ENCODE measurements at regions of chr17 and their contacts with region 1.

Region 1: DNA sequence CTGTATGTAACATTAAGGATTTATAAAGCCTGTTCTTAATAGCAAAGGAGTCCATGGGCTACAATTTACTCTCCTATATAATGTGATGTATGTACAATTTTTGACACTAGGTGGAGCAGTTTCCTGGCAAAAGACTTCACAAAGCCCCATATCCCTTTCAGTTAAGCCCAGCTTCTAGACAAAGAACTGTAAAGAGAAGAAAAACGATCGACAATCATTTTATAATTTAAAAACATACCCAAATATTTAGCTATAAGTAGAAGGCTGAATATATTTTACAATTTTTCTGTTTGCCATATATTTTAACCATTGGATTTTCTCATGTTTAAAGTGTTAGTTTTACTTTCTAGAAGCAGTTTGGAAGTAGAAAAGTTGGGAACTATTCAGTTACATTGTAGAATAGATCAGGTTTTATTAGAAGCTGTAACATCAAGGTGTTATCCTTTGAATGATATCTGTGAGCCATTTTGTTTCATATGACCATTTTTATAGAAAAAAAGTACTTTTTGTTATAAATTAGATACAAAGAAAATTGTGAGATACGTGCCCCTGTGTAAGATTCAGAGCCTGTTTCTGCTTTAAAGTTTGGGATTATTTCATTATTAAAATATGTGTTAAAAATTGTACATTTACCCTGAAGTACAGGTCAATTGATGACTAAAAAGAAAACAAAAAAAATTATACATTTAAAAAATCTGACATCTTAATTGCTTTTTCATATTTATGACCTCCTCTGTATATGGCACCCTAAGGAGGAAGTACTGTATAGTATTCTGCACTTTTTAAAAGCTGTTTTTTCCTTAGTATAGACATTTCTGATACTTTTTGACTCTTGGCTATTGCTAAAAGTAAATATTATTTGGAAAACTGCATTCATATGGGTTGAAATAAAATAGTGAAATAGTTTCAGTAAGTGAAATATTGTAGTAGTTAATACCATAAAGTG is 46.3 kb downstream of the VMP1 start:
- DNase-seq: peak in 11 of 42 donors; percentile 10 to 69 (median 34)

Region 2: DNA sequence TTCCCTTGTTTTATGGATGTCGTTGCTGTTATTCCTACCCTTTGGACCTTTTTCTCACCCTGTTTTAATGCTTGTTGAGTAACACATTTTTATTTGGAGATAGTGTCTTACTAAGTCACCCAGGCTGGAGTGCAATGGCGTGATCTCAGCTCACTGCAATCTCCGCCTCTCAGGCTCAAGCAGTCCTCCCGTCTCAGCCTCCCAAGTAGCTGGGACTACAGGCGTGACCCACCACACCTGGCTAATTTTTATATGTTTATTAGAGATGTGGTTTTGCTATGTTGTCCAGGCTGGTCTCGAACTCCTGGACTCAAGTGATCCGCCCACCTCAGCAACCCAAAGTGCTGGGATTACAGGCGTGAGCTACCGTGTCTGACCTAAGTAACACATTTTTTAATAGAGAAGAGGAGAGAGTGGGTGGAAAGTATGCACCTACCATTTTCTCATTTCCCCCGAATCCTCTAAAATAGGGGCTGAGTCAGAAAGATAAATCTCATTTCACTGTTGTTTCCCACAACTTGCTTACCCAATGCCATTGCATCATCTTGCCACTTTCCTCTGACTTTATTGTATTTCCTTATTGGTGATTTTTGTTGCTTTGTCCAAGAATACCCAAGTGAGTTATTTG is 181.4 kb before region 1 on chr17:
- intact Hi-C with region 1: no loop called
- DNase-seq: no peak

Region 3: DNA sequence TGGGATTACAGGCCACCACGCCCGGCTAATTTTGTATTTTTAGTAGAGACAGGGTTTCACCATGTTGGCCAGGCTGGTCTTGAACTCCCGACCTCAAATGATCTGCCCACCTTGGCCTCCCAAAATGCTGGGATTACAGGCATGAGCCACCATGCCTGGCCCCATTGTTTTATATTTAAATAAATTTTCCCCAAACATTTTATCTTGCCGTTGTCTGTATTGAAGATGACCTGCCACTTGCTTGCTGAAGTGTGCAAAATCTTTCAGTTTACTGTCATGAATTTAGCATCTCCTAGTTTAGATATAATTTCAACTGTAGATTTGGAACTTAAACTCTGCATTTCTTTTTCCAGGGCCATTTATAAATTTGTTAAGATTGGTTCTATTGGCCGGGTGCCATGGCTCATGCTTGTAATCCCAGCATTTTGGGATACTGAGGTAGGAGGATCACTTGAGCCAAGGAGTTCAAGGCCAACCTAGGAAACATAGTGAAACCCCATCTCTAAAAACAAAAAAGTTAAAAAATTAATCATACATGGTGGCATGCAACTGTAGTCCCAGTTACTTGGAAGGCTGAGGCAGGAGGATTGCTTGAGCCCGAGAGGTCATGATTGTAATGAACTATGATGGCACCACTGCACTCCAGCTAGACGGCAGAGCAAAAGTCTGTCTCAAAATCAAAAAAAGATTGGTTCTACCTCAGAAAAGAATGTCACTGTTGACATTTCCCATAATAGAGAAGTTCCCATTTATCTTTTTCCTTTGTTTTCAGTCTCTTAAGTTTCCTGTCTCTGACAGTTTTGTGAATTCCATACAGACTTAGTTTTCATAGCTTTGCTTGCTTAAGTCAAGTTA is 38.0 kb after region 1 on chr17:
- intact Hi-C with region 1: no loop called
- DNase-seq: no peak

Region 4: GRCh38 chr17:59829217-59830006 is 75.6 kb after region 1 on chr17:
- intact Hi-C with region 1: no loop called
- DNase-seq: no peak

Region 5: GRCh38 chr17:59859444-59860025 is 105.7 kb after region 1 on chr17:
- intact Hi-C with region 1: loop called (anchors 10 kb)
- DNase-seq: no peak